Dorsolateral prefrontal cortex (tissue), 120 donors: ENCODE measurements at regions of chr9 and their contacts with region 1.

Region 1: DNA sequence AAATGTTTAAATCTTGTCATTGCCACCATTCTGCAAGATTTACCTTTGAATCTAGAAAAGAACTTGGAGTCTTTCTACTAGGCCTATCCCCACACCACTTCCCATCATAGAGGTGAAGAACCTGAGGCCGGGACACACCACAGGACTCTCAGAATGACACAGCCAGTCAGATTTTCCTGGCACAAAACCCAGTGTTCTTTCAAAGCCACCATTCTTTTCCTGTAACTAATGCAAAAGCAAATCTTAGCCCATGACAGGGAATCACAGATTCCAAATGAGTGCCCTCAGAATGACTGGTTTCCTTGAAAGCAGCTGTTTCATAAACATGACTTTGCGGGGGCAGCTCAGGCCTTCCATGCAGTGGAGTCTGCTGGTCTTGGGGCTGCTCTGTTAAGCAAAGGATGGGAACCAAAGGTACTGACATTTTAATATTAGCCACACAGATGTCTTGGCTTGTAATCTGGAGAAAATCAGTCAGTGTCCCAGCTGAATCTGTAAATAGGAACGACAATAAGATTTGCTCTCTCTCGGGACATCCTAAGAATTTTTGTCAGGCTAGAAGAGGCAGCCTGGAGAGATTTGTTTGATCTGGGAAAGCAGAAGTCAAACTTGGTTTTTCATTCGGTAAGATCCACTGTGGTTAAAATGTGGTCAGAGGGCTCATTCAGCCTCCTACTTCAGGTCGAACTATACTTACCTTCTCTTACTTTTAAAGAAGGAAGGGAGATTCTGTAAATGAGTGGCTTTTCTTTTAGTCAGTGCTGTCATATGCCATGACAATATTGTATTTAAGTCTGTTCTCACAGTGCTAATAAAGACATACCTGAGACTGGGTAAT is 115.1 kb downstream of the PALM2AKAP2 start:
- DNase-seq: no peak
- H3K4me3 ChIP-seq: no peak overlapping the region
- H3K27ac ChIP-seq: peak overlapping the region in 30 of 59 donors; percentile 2 to 71 (median 44)
- H3K27me3 ChIP-seq: no peaks in the 10 kb centered on the region
- CTCF ChIP-seq: no peak

Region 2: DNA sequence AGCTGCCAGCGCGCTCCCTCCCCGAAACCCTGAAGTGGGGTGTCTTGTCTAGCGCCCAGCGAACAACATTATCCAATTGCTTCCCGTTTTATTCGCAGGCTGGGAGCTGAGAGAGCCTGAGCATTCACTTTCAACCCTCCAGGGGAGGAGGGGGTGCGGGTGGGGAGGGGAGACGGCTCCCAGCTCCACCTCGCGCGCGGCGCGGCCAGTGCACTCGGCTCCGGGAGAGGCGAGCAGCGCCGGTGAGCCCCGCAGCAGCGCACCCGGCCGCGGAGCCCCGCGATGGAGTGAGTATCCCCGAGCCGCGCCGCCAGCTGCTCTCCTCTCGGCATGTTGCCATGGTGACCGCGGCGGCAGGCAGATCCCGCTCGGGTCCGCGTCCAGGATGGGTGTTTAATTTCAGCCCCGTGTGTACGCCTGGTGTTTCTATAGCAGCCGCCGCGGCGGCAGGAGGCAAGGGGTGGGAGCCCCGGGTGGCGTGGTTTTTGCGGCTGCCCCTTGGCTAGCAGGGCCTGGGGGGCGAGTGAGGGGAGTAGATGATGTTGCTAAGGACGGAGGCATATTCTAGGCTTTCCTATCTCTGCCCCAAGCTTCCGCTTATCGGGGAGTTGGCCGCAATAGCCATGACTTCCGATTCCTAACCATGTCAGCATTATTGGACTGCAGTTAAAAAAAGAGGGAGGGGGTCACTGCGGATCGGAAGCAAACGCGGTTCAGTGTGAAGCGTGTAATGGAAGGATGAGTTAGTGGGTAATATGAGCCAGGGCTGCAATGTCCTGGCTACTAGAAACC is 254.4 kb before region 1 on chr9:
- intact Hi-C with region 1: loop called in 1 of 2 experiments (anchors 10 kb)
- DNase-seq: peak; percentile 33 to 89 (median 77)
- H3K4me3 ChIP-seq: peak overlapping the region; percentile 34 to 88 (median 72)
- H3K27ac ChIP-seq: peak overlapping the region; percentile 4 to 98 (median 95)
- H3K27me3 ChIP-seq: peaks cover 0 to 11% (median 0%) of the 10 kb centered on the region in 45 donors
- CTCF ChIP-seq: peak in 7 of 56 donors; percentile 4 to 27 (median 12)